Mammary epithelial cell (primary cell): ENCODE measurements at regions of chr22 and their contacts with region 1.

Region 1: GRCh38 chr22:19854778-19855503 is at the starts of genes GNB1L and RTL10:
- DNase-seq: peak; percentile 96
- H3K4me3 ChIP-seq: peak within 1 kb of the TSS; percentile 85 to 94 (median 88)
- H3K27ac ChIP-seq: peak within 1 kb of the TSS; percentile 62
- H3K4me1 ChIP-seq: peaks cover 48% of the 10 kb centered on the region
- H3K27me3 ChIP-seq: no peaks in the 10 kb centered on the region
- CTCF ChIP-seq: no peak
- total RNA-seq, gene GNB1L: 3.8 to 7.8 TPM
- total RNA-seq, gene RTL10: 20.7 to 21.9 TPM

Region 2: DNA sequence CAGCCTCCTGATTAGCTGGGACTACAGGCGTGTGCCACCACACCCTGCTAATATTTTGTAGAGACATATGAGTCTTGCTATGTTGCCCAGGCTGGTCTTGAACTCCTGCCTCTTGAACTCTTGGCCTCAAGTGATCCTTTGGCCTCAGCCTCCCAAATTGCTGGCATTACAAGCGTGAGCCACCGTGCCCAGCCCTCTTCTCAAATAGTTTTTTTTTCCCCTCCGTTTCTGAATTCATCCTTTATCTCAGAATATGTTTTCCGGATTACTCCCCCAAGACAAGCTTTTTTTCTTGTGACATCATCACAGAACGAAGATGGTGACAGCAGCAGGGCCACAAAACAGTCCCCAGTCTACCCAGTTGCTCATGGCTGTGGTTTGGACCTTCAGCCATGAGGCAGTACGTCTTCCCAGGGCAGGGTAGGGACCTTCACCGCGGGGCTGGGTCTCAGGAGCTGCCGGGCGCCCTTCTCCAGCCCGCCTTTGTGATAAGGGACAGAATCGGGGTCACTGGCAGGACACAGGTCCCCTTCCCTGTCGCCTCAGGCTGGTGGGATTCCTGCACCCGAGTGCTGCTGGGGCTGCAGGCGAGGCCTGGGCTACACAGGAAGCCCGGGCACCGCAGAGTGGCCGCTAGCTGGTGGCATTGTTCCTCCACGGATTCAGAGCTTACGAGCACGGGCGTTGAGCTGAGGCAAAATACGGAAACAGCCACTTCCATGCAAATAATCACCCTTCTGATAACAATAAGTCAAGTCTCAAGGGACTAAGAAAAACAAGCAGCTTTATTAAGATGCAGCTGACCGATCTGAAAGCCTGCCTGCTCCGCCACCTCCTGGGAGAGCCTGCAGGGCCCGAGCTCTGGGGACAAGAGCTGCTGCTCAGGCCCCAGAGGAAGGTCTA is 82.3 kb before region 1 on chr22:
- CTCF ChIA-PET with region 1: no interaction called
- dilution Hi-C with region 1: no loop called
- in situ Hi-C with region 1: no loop called
- intact Hi-C with region 1: loop called (anchors 5 kb)
- DNase-seq: no peak
- H3K4me3 ChIP-seq: no peak overlapping the region
- H3K27ac ChIP-seq: no peak overlapping the region
- H3K4me1 ChIP-seq: no peaks in the 10 kb centered on the region
- H3K27me3 ChIP-seq: no peaks in the 10 kb centered on the region
- CTCF ChIP-seq: no peak

Region 3: GRCh38 chr22:19799322-19800190 is 55.4 kb before region 1 on chr22:
- CTCF ChIA-PET with region 1: no interaction called
- dilution Hi-C with region 1: no loop called
- in situ Hi-C with region 1: loop called in 1 of 2 experiments (anchors 5 kb)
- intact Hi-C with region 1: no loop called
- DNase-seq: no peak
- H3K4me3 ChIP-seq: no peak overlapping the region
- H3K27ac ChIP-seq: no peak overlapping the region
- H3K4me1 ChIP-seq: no peaks in the 10 kb centered on the region
- H3K27me3 ChIP-seq: no peaks in the 10 kb centered on the region
- CTCF ChIP-seq: no peak

Region 4: GRCh38 chr22:19868773-19869471 is 14.0 kb after region 1 on chr22:
- CTCF ChIA-PET with region 1: no interaction called
- dilution Hi-C with region 1: no loop called
- in situ Hi-C with region 1: no loop called
- intact Hi-C with region 1: loop called (anchors 1 kb)
- DNase-seq: peak; percentile 70
- H3K4me3 ChIP-seq: no peak overlapping the region
- H3K27ac ChIP-seq: peak overlapping the region; percentile 31
- H3K4me1 ChIP-seq: peaks cover 24% of the 10 kb centered on the region
- H3K27me3 ChIP-seq: no peaks in the 10 kb centered on the region
- CTCF ChIP-seq: no peak

Region 5: GRCh38 chr22:19891317-19892256 is 36.6 kb after region 1 on chr22:
- CTCF ChIA-PET with region 1: no interaction called
- dilution Hi-C with region 1: no loop called
- in situ Hi-C with region 1: no loop called
- intact Hi-C with region 1: loop called (anchors 2 kb)
- DNase-seq: peak; percentile 85
- H3K4me3 ChIP-seq: peak overlapping the region in 1 of 3 experiments; percentile 23
- H3K27ac ChIP-seq: peak overlapping the region; percentile 18
- H3K4me1 ChIP-seq: peaks cover 51% of the 10 kb centered on the region
- H3K27me3 ChIP-seq: no peaks in the 10 kb centered on the region
- CTCF ChIP-seq: no peak

Region 6: DNA sequence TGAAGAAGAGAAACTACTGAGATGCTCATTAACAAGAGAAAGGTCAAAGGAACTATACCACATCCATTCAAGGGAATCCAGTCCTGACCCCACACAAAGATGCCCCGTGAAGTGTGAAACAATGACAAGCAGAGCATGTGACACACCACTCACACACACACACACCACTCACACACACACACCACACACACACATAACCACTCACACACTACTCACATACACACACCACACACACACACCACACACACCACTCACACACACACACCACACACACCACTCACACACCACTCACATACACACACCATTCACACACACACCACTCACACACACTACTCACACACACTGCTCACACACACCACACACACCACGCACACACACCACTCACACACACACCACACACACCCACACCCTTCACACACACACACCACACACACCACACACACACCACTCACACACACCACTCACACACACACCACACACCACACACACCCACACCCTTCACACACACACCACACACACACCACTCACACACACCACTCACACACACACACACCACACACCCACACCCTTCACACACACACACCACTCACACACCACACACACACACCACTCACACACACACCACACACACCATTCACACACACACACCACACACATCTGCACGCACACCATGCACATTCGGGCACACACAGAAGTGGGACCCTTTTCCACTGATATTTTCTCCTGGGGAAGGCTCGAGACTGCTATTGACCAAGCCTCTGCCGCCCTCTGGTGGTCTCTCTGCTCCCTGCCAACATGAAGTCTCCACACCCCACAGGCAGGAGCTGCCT is 54.6 kb after region 1 on chr22:
- CTCF ChIA-PET with region 1: no interaction called
- dilution Hi-C with region 1: no loop called
- in situ Hi-C with region 1: no loop called
- intact Hi-C with region 1: loop called (anchors 2 kb)
- DNase-seq: peak; percentile 47
- H3K4me3 ChIP-seq: no peak overlapping the region
- H3K27ac ChIP-seq: no peak overlapping the region
- H3K4me1 ChIP-seq: no peaks in the 10 kb centered on the region
- H3K27me3 ChIP-seq: no peaks in the 10 kb centered on the region
- CTCF ChIP-seq: peak; percentile 92 to 96

Region 7: GRCh38 chr22:19941365-19942082 is 86.6 kb after region 1 on chr22 and contains the starts of genes COMT and TXNRD2:
- CTCF ChIA-PET with region 1: no interaction called
- dilution Hi-C with region 1: no loop called
- in situ Hi-C with region 1: no loop called
- intact Hi-C with region 1: loop called (anchors 5 kb)
- DNase-seq: peak; percentile 54
- H3K4me3 ChIP-seq: peak within 1 kb of the TSS; percentile 64 to 71 (median 70)
- H3K27ac ChIP-seq: peak within 1 kb of the TSS; percentile 80
- H3K4me1 ChIP-seq: peaks cover 28% of the 10 kb centered on the region
- H3K27me3 ChIP-seq: no peaks in the 10 kb centered on the region
- CTCF ChIP-seq: no peak
- total RNA-seq, gene COMT: 180 to 193 TPM
- total RNA-seq, gene TXNRD2: 13.2 to 22.1 TPM